ENCODE measurements at regions of chr3 and their contacts with region 1.

Region 1: DNA sequence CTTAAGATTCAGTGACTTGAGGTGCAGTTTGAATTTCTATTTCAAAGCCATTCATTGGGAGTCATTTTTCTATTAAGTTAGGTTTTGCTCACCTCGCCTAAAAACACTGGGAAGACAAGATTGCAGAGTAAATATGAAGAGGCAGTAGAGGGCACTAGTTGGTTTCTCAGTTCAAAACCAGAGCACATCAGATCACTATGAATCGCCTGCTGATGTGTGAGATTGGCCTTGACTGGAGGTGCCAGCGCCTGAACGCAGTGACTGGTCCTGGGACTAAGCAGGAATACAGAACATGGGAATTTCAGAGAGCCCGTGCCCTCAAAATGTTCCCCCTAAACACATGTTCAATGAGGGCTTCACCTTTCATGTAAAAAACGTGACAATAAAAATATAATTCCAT is 229.0 kb downstream of the ITPR1 start:
- DNase-seq: peak; percentile 57 to 80 (median 69)
- ATAC-seq: peak; percentile 76 to 78
- H3K4me3 ChIP-seq: no peak overlapping the region
- H3K27ac ChIP-seq: peak overlapping the region; percentile 39
- H3K4me1 ChIP-seq: no peaks in the 10 kb centered on the region
- H3K27me3 ChIP-seq: no peaks in the 10 kb centered on the region

Region 2: DNA sequence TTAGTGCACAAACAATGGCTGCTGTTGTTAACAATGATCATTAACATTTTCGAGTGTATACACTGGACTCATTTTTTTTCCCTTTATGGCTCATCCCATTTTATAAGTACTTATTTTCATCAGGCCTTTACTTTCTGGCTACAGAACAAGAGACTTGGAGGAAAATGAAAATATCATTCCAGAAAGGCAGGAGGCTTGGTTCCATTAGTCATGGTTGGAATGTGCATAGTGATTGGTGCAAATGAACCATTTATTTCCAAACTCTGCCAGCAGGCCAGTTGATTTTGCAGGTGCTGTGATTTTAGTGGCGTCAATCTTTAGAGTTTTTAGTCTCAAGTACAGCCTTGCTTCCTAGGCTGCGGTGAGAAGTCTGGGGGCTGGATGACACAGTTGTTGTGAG is 77.2 kb before region 1 on chr3:
- intact Hi-C with region 1: no loop called
- DNase-seq: no peak
- ATAC-seq: no peak
- H3K4me3 ChIP-seq: no peak overlapping the region
- H3K27ac ChIP-seq: no peak overlapping the region
- H3K4me1 ChIP-seq: no peaks in the 10 kb centered on the region
- H3K27me3 ChIP-seq: no peaks in the 10 kb centered on the region

Region 3: GRCh38 chr3:4814305-4814903 is 92.3 kb after region 1 on chr3:
- intact Hi-C with region 1: loop called in 1 of 4 experiments (anchors 10 kb)
- DNase-seq: peak; percentile 52 to 74 (median 73)
- ATAC-seq: peak; percentile 72 to 91
- H3K4me3 ChIP-seq: no peak overlapping the region
- H3K27ac ChIP-seq: no peak overlapping the region
- H3K4me1 ChIP-seq: no peaks in the 10 kb centered on the region
- H3K27me3 ChIP-seq: no peaks in the 10 kb centered on the region

Region 4: DNA sequence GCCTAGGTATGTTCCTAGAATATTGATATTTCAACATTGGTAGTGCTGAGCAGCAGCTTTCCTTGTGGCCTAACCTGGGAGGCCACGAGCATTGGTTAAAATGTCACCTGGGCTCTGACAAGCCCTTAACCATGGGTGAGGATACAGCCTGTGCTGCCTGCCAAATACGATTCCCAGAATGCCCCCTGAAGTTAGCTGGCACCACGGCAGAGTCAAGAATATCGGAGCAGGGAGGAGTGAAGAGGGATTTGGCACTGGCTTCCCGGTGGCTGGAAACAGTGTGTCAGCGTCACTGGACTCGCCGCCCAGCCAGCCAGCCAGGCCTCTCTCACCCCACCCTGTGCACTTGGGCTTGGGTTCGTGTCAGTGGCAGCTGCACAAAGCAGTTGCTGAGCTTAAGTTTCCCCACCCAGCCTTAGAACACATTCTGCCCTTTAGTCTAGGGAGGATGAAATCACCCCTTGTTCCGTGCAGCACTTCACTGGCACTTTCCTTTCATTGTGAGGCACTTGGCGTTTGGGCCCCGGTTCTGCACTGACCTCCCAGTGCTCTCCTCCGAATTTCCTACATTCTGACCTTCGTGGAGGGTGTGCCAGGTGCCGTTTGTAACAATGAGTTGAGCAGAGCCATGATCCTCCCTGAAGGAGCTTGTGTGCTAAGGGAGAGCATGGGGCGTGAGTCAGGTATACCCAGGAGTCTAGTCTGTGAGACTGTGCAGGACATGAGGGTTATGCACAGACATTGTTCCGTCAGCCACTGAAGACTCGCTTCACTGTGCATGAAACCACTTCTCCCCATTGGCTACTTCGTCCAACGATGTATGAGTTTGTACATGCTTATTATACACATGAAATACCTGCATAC is 104.4 kb after region 1 on chr3:
- intact Hi-C with region 1: loop called in 1 of 4 experiments (anchors 10 kb)
- DNase-seq: peak; percentile 94 to 95 (median 95)
- ATAC-seq: peak; percentile 92 to 93
- H3K4me3 ChIP-seq: no peak overlapping the region
- H3K27ac ChIP-seq: peak overlapping the region; percentile 76
- H3K4me1 ChIP-seq: peaks cover 23% of the 10 kb centered on the region
- H3K27me3 ChIP-seq: no peaks in the 10 kb centered on the region